ENCODE measurements at regions of chr4 and their contacts with region 1.

Region 1: GRCh38 chr4:21979196-21979595 is 30.6 kb upstream of the KCNIP4 start:
- DNase-seq: no peak
- H3K4me3 ChIP-seq: no peak overlapping the region
- H3K27ac ChIP-seq: no peak overlapping the region
- H3K4me1 ChIP-seq: no peaks in the 10 kb centered on the region
- H3K27me3 ChIP-seq: no peaks in the 10 kb centered on the region
- CTCF ChIP-seq: no peak
- POLR2A ChIP-seq: no peak

Region 2: DNA sequence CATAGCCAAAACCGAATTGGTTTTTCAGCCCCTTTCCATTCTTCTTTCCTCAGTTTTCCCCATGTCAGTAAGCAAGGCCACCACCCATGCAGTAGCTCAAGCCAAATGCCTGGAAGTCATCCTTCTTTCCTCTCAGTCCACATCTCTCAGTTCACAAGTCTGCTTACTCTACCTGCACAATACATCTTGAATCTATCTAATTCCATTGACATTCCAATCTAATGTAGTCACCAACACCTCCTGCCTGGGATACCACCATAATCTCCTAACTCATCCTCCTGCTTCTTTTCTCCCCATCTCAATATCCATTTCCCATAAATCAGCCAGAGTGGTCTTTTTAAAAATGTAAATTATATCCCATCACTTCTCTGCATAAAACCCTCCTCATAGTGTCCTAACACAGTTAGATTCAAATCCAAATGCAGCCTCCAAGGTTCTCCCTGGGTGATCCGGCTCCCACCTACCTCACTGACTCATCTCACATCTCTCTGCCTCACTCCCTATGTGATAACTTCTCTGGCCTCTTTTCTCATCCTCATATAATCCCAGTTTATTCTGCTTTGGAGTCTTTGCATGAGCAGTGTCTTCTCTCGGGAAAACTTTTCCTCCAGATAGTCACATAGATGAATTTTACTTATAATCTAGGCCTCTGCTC is 57.5 kb before region 1 on chr4:
- intact Hi-C with region 1: loop called (anchors 2 kb)
- DNase-seq: no peak
- H3K4me3 ChIP-seq: no peak overlapping the region
- H3K27ac ChIP-seq: no peak overlapping the region
- H3K4me1 ChIP-seq: no peaks in the 10 kb centered on the region
- H3K27me3 ChIP-seq: no peaks in the 10 kb centered on the region
- CTCF ChIP-seq: no peak
- POLR2A ChIP-seq: no peak

Measured in breast epithelium (tissue), 4 donors.